ENCODE measurements at regions of chr16 and their contacts with region 1.

Region 1: DNA sequence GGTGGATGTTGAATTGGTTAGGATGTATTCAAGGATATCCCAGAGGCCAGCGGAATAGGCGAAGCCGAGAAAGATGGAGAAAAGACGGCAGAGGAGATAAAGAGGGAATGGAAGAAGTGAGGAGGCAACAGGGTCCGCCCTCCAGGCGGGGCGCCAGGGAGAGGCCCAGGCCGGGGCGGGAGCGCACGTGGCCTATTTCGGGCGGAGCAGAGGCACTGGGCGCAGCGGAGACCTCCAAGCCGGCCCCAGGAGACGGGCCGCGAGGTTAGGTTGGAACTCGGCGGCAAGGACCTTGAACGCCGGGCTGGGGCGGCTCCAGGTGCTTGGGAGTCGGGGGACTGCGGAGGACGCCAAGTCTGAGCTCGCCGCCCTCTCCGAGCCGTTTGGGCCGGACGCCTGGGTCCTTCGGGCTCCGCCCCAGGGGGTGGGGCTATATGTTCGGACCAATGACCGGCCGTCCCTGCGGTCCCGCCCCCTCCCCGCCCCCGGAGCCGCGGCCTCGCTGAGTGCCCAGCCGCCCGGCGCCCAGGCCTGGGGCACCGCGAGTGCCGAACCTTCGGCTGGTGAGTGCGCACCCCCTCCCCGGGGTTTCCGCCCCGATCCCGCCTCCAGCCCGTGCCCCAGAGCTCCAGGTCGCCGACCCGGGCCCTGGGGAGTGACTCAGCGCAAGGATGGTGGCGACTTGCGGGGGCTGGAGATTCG is at the start of gene ZNF771:
- DNase-seq: peak; percentile 97
- total RNA-seq, gene ZNF771: 7.5 TPM

Region 2: GRCh38 chr16:30378236-30379204 is 28.7 kb before region 1 on chr16:
- intact Hi-C with region 1: loop called (anchors 2 kb)
- DNase-seq: peak; percentile 100

Region 3: DNA sequence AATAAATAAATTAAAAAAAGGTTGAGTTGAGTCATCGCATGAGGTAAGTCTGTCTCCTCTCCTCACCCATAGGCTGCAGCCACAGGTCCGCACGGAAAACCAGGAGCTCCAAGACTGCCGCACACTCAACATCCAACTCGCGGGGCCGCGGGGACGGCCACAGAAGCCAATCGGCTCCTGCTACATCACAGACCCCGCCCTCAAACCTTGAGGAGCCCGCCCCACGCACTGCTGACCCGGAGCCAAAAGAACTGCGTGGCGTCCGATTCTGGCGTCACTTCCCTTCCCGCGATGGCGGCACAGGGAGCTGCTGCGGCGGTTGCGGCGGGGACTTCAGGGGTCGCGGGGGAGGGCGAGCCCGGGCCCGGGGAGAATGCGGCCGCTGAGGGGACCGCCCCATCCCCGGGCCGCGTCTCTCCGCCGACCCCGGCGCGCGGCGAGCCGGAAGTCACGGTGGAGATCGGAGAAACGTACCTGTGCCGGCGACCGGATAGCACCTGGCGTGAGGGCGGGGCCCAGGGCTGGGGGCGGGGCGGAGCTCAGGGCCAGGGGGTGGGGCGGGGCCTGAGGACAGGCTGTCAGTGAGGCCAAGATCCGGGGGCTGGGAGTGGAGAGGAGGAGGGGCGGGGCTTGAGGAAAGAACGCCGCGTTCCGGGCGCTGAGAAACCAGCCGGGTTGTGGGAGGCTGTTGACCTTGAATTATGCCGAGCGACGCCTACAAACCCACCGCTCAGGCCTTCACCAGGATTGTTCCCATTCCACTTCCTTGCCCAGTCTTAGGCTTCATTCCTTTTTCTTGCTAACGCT is 710.3 kb after region 1 on chr16 and contains the start of gene KAT8:
- intact Hi-C with region 1: no loop called
- DNase-seq: peak; percentile 99
- total RNA-seq, gene KAT8: 56.5 TPM